ENCODE measurements at regions of chr2 and their contacts with region 1.

Region 1: DNA sequence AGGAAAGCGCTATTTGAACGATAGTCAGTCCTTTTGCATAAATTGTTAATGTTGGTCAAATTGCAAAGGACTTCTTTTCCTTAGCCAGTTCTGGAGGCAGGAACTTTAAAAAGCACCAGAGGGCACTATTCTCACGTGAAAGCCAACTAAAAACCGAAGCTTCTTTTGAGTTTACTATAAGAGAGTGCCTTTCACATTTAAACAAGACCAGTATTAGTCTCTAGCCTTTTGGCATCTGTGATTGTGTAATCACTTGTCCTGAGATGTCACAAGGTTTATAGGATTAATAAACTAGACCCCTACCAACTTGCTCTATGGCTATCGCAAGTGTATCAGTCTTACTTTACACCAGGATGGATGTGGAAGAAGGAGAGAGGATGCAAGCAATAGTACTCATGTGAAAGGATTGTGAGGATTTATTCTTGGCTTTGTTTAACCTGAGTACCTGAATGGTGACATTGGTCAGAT is 14.4 kb upstream of the STAT4 start:
- DNase-seq: peak; percentile 47
- H3K4me3 ChIP-seq: no peak overlapping the region
- H3K27ac ChIP-seq: no peak overlapping the region
- H3K27me3 ChIP-seq: no peaks in the 10 kb centered on the region
- CTCF ChIP-seq: peak; percentile 72

Region 2: GRCh38 chr2:190947711-190948251 is 217.4 kb before region 1 on chr2:
- in situ Hi-C with region 1: no loop called
- DNase-seq: peak; percentile 62
- H3K4me3 ChIP-seq: peak overlapping the region; percentile 10
- H3K27ac ChIP-seq: peak overlapping the region; percentile 81
- H3K27me3 ChIP-seq: no peaks in the 10 kb centered on the region
- CTCF ChIP-seq: peak; percentile 38

Region 3: DNA sequence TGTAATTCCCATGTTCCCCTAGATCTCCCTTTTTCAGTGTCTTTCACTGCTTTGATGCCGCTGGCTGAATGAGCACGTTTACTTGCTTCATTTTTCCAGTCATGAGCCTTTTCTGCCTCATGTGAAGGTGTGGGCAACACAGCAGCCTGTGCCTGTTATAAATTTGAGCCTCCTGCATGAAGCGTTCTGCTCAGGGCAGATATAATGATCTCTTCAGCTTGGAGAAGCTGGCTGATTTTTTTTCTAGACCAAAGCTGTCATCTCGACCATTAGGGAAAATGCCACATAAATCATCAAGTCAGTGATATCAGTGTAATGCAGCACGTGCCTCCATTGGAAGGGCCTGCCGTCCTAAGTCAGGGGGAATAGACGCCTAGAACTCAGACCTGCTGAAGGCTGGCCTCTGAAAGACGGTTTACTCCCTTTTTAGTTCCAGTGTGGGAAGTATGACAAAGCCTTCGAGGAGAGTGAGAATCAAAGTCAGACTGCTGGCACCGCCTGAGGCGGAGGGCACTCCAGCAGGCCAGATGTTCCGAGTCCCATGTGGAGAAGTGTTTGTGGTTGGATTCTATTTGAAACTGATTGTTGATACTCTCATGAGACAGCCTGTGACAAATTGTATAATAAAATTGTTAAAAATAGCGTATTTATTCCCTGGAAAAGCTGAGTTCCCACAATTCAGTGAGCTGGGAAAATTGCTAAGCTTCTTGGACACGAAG is 276.4 kb after region 1 on chr2:
- in situ Hi-C with region 1: no loop called
- DNase-seq: no peak
- H3K4me3 ChIP-seq: no peak overlapping the region
- H3K27ac ChIP-seq: no peak overlapping the region
- H3K27me3 ChIP-seq: no peaks in the 10 kb centered on the region
- CTCF ChIP-seq: no peak

Region 4: DNA sequence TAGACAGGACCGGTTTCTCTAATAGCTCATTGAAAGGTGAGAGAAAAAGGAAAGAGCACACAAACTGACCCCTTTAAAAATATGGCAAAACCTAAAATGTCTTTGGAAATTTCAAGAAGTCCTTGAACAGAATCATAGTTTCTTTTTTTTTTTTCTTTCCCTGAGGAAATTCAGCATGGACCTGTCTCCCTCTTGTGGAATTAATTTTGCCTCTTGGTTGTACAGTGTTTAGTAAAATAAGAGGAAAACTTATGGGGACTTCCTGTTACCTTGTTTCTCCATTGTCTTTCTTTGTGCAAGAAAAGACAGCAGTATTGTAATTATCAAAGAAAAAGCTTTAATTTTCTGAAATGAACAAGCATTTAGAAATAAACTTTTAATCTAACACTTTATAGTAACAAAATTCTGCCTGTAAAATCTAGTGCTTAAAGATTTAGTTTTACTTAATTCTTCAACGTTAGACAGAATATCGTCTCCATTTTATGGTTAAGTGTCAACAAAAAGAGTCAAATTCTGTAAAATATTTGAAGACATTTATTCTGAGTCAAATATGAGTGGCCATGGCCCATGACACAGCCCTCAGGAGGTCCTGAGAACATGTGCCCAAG is 336.5 kb after region 1 on chr2:
- in situ Hi-C with region 1: loop called (anchors 5 kb)
- DNase-seq: peak; percentile 11
- H3K4me3 ChIP-seq: no peak overlapping the region
- H3K27ac ChIP-seq: no peak overlapping the region
- H3K27me3 ChIP-seq: no peaks in the 10 kb centered on the region
- CTCF ChIP-seq: peak; percentile 48

Measured in brain microvascular endothelial cell (primary cell).